CD14-positive monocyte (primary cell): ENCODE measurements at regions of chr2 and their contacts with region 1.

Region 1: DNA sequence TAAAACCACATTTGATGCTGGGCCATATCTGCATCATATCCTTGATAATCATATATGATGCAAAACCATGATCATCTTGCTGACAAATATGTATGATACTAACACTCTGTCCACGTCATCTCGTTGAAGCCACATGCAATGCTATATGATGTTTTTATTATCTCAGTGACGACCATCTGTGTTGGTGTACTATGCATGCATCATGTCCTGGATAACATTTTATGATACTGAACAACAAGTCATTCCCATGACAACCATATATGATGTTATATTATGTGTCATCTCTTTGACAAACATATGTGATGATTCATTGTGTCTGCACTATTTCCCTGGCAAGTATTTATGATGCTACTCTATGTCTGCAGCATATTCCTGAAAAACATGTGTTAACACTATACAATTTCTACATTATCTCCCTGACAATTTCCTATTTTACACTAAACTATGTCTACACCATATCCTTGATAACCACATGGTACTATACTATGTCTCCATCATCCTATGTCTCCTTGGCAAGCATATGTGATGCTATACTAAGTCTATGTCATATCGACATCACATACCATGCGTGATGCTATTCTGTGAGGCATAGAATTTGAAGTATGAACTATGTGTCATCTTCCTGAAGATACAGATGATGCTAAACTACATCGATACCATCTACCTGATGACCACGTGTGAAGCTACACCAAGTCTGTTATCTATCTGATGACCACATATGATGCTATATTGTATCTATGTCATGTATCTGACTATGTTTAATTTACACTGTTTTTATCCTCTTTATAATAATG is 37.0 kb downstream of the DAW1 start:
- DNase-seq: no peak
- H3K4me3 ChIP-seq: no peak overlapping the region
- H3K4me3 Mint-ChIP-seq: no peak overlapping the region
- H3K27ac ChIP-seq: no peak overlapping the region
- H3K27ac Mint-ChIP-seq: no peak overlapping the region
- H3K4me1 ChIP-seq: no peaks in the 10 kb centered on the region
- H3K4me1 Mint-ChIP-seq: no peaks in the 10 kb centered on the region
- H3K27me3 ChIP-seq: no peaks in the 10 kb centered on the region
- H3K27me3 Mint-ChIP-seq: peaks cover 0 to 9% (median 2%) of the 10 kb centered on the region in 3 donors
- CTCF ChIP-seq: no peak

Region 2: GRCh38 chr2:227079726-227080125 is 828.7 kb before region 1 on chr2:
- intact Hi-C with region 1: loop called in 1 of 2 experiments (anchors 10 kb)
- DNase-seq: no peak
- H3K4me3 ChIP-seq: no peak overlapping the region
- H3K4me3 Mint-ChIP-seq: no peak overlapping the region
- H3K27ac ChIP-seq: no peak overlapping the region
- H3K27ac Mint-ChIP-seq: no peak overlapping the region
- H3K4me1 ChIP-seq: no peaks in the 10 kb centered on the region
- H3K4me1 Mint-ChIP-seq: no peaks in the 10 kb centered on the region
- H3K27me3 ChIP-seq: no peaks in the 10 kb centered on the region
- H3K27me3 Mint-ChIP-seq: peaks cover 0 to 1% (median 0%) of the 10 kb centered on the region in 3 donors
- CTCF ChIP-seq: no peak